Activated naive CD4-positive, alpha-beta T cell treated with anti-CD3 and anti-CD28 coated beads for 36 hours (primary cell): ENCODE measurements at regions of chr3 and their contacts with region 1.

Region 1: DNA sequence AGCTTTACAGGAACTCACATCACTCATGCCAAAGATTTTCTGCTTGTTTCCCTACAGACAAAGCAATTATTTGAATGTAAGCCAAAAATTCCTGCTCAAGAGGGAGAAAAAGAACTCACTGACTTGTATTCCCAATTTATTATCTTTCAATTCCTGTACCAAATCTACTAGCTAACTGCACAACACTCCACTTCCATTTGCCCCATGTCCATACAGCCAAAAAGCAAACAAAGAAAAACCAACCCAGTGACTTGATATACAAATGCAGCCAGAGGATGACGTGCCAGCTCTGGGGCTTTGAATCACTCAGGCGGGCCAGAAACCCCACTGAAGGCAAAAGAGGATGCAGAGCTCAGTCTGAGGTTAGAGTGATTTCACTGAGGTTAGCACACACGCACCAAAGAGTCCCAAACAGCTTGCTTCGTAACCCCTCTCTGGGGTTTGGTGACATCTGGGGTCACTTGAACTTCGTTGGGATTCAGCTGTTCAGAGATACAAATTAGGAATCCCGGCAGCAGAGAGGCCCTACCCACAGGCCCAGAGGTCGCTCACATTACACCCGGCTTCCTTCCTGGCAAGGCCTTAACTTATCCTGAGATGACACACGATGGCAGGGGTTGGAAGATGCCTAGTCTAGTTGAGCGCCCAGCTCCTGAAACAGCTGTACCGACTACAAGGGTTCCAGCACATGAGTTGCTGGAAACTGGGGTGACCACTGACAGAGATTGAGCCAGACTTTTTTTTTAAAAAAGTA is 1.6 kb downstream of the RFTN1 start:
- DNase-seq: peak; percentile 95
- H3K4me3 Mint-ChIP-seq: peak overlapping the region; percentile 92
- H3K27ac Mint-ChIP-seq: peak overlapping the region; percentile 100
- H3K4me1 Mint-ChIP-seq: peaks cover 73% of the 10 kb centered on the region
- H3K27me3 Mint-ChIP-seq: no peaks in the 10 kb centered on the region

Region 2: GRCh38 chr3:16264708-16265454 is 247.0 kb before region 1 on chr3 and contains the starts of genes DPH3 and OXNAD1:
- CTCF ChIA-PET with region 1: interaction called, 5 read pairs
- intact Hi-C with region 1: loop called (anchors 1 kb)
- DNase-seq: peak; percentile 100
- H3K4me3 Mint-ChIP-seq: peak within 1 kb of the TSS; percentile 96
- H3K27ac Mint-ChIP-seq: peak within 1 kb of the TSS; percentile 94
- H3K4me1 Mint-ChIP-seq: peaks cover 31% of the 10 kb centered on the region
- H3K27me3 Mint-ChIP-seq: no peaks in the 10 kb centered on the region
- total RNA-seq, gene DPH3: 16.1 to 17.0 TPM
- total RNA-seq, gene OXNAD1: 32.4 to 34.2 TPM

Region 3: DNA sequence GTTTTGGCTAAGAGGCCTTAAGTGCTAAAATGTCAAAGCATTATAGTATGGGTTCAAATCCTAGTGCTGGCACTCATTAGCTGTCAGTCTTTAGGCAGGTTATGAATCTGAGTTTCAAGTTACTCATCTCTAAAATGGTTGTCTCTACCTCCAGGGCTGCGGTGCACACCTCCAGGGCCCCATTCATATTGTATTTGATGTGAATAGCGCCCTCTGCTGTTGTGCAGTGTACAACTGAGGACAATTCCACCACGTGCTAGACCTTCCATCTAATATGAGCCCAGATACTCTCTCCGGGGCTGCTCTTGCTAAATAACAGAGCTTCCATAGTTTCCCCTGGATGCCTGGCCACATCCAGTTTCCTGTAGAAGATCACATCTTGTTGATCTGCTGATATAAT is 192.6 kb before region 1 on chr3:
- CTCF ChIA-PET with region 1: interaction called, 5 read pairs
- intact Hi-C with region 1: loop called (anchors 1 kb)
- DNase-seq: peak; percentile 97
- H3K4me3 Mint-ChIP-seq: peak overlapping the region; percentile 6
- H3K27ac Mint-ChIP-seq: peak overlapping the region; percentile 95
- H3K4me1 Mint-ChIP-seq: peaks cover 79% of the 10 kb centered on the region
- H3K27me3 Mint-ChIP-seq: no peaks in the 10 kb centered on the region

Region 4: DNA sequence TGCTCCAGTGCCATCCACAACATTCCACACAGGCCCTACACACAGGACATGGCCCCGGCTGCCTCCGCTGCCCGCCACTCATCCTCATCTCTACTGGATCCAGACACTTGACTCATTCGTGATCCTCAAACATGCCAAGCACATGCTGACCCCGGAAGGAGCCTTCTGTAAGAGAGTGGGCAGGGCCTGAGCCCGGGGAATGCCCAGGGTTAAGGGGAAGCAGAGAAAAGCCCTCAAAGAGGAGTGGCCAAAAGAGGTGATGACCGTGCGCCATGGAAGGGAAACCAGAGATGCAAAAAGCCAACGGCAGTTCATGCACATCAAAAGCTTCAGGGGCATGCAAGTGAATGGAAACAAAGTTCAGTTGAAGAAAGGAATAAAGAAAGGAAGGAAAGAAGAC is 44.5 kb before region 1 on chr3:
- CTCF ChIA-PET with region 1: no interaction called
- intact Hi-C with region 1: loop called (anchors 1 kb)
- DNase-seq: peak; percentile 84
- H3K4me3 Mint-ChIP-seq: peak overlapping the region; percentile 50
- H3K27ac Mint-ChIP-seq: peak overlapping the region; percentile 79
- H3K4me1 Mint-ChIP-seq: peaks cover 66% of the 10 kb centered on the region
- H3K27me3 Mint-ChIP-seq: no peaks in the 10 kb centered on the region

Region 5: GRCh38 chr3:16842272-16843270 is 330.7 kb after region 1 on chr3:
- CTCF ChIA-PET with region 1: no interaction called
- intact Hi-C with region 1: loop called (anchors 5 kb)
- DNase-seq: peak; percentile 91
- H3K4me3 Mint-ChIP-seq: peak overlapping the region; percentile 72
- H3K27ac Mint-ChIP-seq: peak overlapping the region; percentile 93
- H3K4me1 Mint-ChIP-seq: peaks cover 68% of the 10 kb centered on the region
- H3K27me3 Mint-ChIP-seq: no peaks in the 10 kb centered on the region

Region 6: GRCh38 chr3:18424729-18425640 is 1913.1 kb after region 1 on chr3 and contains the start of gene SATB1:
- CTCF ChIA-PET with region 1: no interaction called
- intact Hi-C with region 1: loop called (anchors 5 kb)
- DNase-seq: peak; percentile 84
- H3K4me3 Mint-ChIP-seq: peak within 1 kb of the TSS; percentile 86
- H3K27ac Mint-ChIP-seq: peak within 1 kb of the TSS; percentile 98
- H3K4me1 Mint-ChIP-seq: peaks cover 73% of the 10 kb centered on the region
- H3K27me3 Mint-ChIP-seq: no peaks in the 10 kb centered on the region
- total RNA-seq, gene SATB1: 303 to 305 TPM